Endothelial cell of umbilical vein (primary cell): ENCODE measurements at regions of chr1 and their contacts with region 1.

Region 1: DNA sequence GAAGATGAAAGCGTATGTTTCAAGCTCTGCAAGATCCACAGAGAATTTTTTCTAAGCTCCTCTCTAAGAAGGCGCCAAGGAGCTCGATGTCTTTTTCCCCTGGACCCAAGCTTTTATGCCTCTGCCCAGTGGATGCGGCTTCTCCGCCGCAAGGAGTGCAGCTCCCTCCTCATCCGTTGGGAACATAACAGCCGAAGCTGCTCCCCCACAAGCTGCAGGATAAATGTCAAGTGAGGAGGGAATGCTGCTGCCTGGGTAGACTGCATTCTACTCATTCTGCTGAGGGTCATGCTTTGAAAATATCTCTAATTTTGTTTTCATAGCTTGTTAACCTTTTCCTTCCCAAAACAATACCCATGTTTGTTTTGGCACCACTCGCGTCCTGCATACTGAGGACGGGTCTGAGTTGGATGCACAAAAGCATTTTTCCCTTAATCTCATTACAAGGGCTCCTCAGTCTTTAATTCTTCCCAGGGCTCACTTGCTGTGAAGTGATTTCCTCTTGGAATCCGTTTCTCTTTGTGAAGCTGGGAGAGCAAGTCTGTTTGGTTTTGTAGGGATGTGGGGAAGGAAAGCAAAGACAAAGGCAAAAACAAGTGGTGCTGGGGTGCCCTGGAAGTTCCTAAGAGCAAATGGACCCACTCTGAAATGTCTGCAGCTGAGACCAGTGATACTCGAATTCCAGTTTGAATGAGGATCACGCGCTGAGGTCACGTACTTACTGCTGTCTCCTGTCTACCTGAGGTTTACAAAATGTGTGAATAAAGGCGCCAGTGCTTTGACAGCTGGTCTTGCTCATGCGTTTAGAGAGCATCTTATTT is 134.0 kb upstream of the IRF2BP2 start:
- DNase-seq: peak; percentile 99
- H3K4me3 ChIP-seq: peak overlapping the region in 1 of 3 experiments; percentile 7
- H3K27ac ChIP-seq: peak overlapping the region; percentile 88
- H3K4me1 ChIP-seq: peaks cover 36% of the 10 kb centered on the region
- H3K27me3 ChIP-seq: no peaks in the 10 kb centered on the region
- CTCF ChIP-seq: peak in 1 of 2 donors; percentile 15
- POLR2A ChIP-seq: peak; percentile 91

Region 2: GRCh38 chr1:234631721-234632125 is 112.3 kb before region 1 on chr1:
- CTCF ChIA-PET with region 1: interaction called, 5 read pairs
- POLR2A ChIA-PET with region 1: no interaction called
- dilution Hi-C with region 1: no loop called
- intact Hi-C with region 1: loop called (anchors 1 kb)
- DNase-seq: peak; percentile 98
- H3K4me3 ChIP-seq: no peak overlapping the region
- H3K27ac ChIP-seq: peak overlapping the region; percentile 95
- H3K4me1 ChIP-seq: peaks cover 38% of the 10 kb centered on the region
- H3K27me3 ChIP-seq: no peaks in the 10 kb centered on the region
- CTCF ChIP-seq: no peak
- POLR2A ChIP-seq: no peak

Region 3: DNA sequence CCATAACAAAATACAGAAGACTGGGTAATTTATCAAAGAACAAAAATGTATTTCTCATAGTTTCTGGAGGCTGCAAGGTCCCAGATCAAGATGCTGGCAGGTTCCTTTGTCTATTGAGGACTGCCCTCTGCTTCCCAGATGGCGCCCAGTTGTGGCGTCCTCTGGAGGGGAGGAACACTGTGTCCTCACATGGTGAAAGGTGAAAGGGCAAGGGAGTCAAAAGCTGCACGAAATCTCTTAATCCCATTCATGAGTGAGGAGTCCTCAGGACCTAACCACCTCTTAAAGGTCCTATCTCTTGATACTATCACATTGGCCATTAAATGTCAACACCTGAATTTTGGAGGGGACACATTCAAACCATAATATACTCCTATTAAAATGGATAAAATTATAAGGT is 54.8 kb before region 1 on chr1:
- CTCF ChIA-PET with region 1: no interaction called
- POLR2A ChIA-PET with region 1: no interaction called
- dilution Hi-C with region 1: no loop called
- intact Hi-C with region 1: no loop called
- DNase-seq: no peak
- H3K4me3 ChIP-seq: no peak overlapping the region
- H3K27ac ChIP-seq: no peak overlapping the region
- H3K4me1 ChIP-seq: no peaks in the 10 kb centered on the region
- H3K27me3 ChIP-seq: no peaks in the 10 kb centered on the region
- CTCF ChIP-seq: no peak
- POLR2A ChIP-seq: no peak

Region 4: GRCh38 chr1:234699795-234700665 is 44.0 kb before region 1 on chr1:
- CTCF ChIA-PET with region 1: no interaction called
- POLR2A ChIA-PET with region 1: no interaction called
- dilution Hi-C with region 1: no loop called
- intact Hi-C with region 1: no loop called
- DNase-seq: peak; percentile 19
- H3K4me3 ChIP-seq: no peak overlapping the region
- H3K27ac ChIP-seq: no peak overlapping the region
- H3K4me1 ChIP-seq: peaks cover 9% of the 10 kb centered on the region
- H3K27me3 ChIP-seq: no peaks in the 10 kb centered on the region
- CTCF ChIP-seq: no peak
- POLR2A ChIP-seq: no peak

Region 5: GRCh38 chr1:234730770-234731568 is 13.0 kb before region 1 on chr1:
- CTCF ChIA-PET with region 1: interaction called, 14 read pairs
- POLR2A ChIA-PET with region 1: interaction called, 4 read pairs
- dilution Hi-C with region 1: no loop called
- intact Hi-C with region 1: loop called (anchors 1 kb)
- DNase-seq: no peak
- H3K4me3 ChIP-seq: no peak overlapping the region
- H3K27ac ChIP-seq: no peak overlapping the region
- H3K4me1 ChIP-seq: peaks cover 24% of the 10 kb centered on the region
- H3K27me3 ChIP-seq: no peaks in the 10 kb centered on the region
- CTCF ChIP-seq: no peak
- POLR2A ChIP-seq: no peak

Region 6: DNA sequence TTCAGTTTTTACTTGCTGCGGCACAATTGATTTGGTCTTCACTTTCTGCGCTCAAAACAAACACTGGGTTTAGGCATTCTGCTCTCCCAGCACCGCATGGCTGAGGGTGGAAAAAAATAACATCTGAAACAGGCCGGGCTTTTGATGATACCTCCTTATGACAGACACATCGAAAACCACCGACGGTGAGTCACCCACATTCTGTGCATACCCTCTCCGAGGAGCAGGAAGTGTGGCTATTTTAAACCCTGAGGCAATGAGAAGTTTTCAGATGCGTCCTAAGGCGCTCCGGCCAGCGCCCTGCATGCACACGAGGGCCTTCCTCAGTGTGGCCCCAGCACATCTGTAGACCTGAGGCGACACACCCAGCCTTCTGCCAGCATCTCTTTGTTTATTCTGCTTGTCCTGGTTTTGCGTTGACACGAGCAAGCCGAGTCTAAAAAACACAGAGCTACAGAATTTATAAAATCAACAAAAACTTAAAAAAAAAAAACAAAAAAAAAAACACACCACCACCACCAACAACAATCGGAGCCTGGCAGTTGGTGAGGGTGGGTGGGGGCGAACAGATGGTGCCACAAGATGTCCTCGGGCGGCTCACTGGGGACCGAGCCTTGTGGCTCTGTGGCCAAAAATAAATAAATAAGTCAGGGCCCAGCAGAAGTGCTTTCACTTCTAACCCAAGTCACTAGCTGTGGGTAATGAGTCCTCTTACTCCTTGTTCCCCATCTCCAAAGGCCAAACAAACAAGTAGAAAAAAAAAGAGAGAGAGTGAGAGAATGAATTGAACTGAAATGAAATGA is 28.5 kb after region 1 on chr1:
- CTCF ChIA-PET with region 1: interaction called, 8 read pairs
- POLR2A ChIA-PET with region 1: no interaction called
- dilution Hi-C with region 1: no loop called
- intact Hi-C with region 1: loop called (anchors 1 kb)
- DNase-seq: peak; percentile 91
- H3K4me3 ChIP-seq: no peak overlapping the region
- H3K27ac ChIP-seq: peak overlapping the region; percentile 89
- H3K4me1 ChIP-seq: peaks cover 12% of the 10 kb centered on the region
- H3K27me3 ChIP-seq: peaks cover 2% of the 10 kb centered on the region in 2 experiments
- CTCF ChIP-seq: no peak
- POLR2A ChIP-seq: peak; percentile 62

Region 7: GRCh38 chr1:234893725-234894630 is 150.0 kb after region 1 on chr1:
- CTCF ChIA-PET with region 1: no interaction called
- POLR2A ChIA-PET with region 1: no interaction called
- dilution Hi-C with region 1: no loop called
- intact Hi-C with region 1: loop called (anchors 1 kb)
- DNase-seq: peak; percentile 98
- H3K4me3 ChIP-seq: no peak overlapping the region
- H3K27ac ChIP-seq: peak overlapping the region; percentile 93
- H3K4me1 ChIP-seq: peaks cover 20% of the 10 kb centered on the region
- H3K27me3 ChIP-seq: no peaks in the 10 kb centered on the region
- CTCF ChIP-seq: no peak
- POLR2A ChIP-seq: no peak

Region 8: DNA sequence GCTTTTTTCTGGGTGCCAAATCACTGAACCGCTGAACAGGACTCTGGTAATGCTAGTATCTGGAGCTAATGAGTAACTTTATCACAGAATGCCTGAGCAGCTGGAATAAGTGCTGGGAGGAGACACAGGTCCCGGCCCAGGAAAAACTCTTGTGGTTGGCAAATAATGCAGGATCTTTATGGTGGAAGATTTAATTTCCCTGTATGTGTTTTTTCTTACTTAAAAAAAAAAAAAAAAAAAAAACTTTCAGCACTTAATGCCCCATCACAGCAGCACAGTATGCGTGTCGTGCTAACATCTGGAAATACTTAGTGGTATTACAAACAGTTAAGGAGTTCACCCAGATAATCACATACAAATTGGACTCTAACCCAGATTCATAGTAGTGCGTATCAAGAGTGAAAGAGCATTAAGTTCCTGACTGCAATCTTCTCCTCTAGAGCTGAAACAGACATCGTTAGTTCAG is 164.0 kb after region 1 on chr1:
- CTCF ChIA-PET with region 1: no interaction called
- POLR2A ChIA-PET with region 1: no interaction called
- dilution Hi-C with region 1: no loop called
- intact Hi-C with region 1: no loop called
- DNase-seq: no peak
- H3K4me3 ChIP-seq: no peak overlapping the region
- H3K27ac ChIP-seq: no peak overlapping the region
- H3K4me1 ChIP-seq: peaks cover 12% of the 10 kb centered on the region
- H3K27me3 ChIP-seq: no peaks in the 10 kb centered on the region
- CTCF ChIP-seq: no peak
- POLR2A ChIP-seq: no peak